ENCODE measurements at regions of chr2 and their contacts with region 1.

Region 1: GRCh38 chr2:190718652-190719526 is 70.0 kb downstream of the NAB1 start:
- DNase-seq: peak; percentile 91
- H3K4me3 Mint-ChIP-seq: peak overlapping the region; percentile 62
- H3K27ac Mint-ChIP-seq: peak overlapping the region; percentile 97
- H3K4me1 Mint-ChIP-seq: peaks cover 84% of the 10 kb centered on the region
- H3K27me3 Mint-ChIP-seq: no peaks in the 10 kb centered on the region

Region 2: GRCh38 chr2:190408538-190409271 is 310.2 kb before region 1 on chr2:
- CTCF ChIA-PET with region 1: no interaction called
- POLR2A ChIA-PET with region 1: no interaction called
- intact Hi-C with region 1: loop called (anchors 1 kb)
- DNase-seq: peak; percentile 80
- H3K4me3 Mint-ChIP-seq: peak overlapping the region; percentile 82
- H3K27ac Mint-ChIP-seq: peak overlapping the region; percentile 88
- H3K4me1 Mint-ChIP-seq: peaks cover 40% of the 10 kb centered on the region
- H3K27me3 Mint-ChIP-seq: no peaks in the 10 kb centered on the region

Region 3: DNA sequence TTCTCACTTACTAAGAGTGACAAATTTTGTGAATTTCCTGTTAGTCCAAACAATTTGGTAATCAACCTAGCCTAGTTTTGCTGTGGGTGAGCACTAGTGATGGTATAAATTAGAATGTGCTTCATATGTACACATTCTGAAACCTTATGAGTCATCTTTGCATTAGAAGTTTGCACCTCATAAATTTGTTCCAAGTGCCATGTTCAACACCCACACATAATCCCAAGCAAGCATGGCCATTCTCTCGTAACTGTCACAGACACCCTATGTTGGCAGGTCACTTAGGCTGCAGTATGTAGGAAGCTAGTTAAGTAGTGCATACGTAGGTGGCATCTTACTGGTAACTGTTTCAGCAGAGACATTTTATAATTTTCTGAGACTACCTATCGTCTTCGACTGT is 23.1 kb before region 1 on chr2:
- CTCF ChIA-PET with region 1: no interaction called
- POLR2A ChIA-PET with region 1: interaction called, 28 read pairs
- intact Hi-C with region 1: loop called (anchors 1 kb)
- DNase-seq: peak; percentile 61
- H3K4me3 Mint-ChIP-seq: no peak overlapping the region
- H3K27ac Mint-ChIP-seq: peak overlapping the region; percentile 44
- H3K4me1 Mint-ChIP-seq: peaks cover 42% of the 10 kb centered on the region
- H3K27me3 Mint-ChIP-seq: no peaks in the 10 kb centered on the region

Region 4: GRCh38 chr2:190791347-190791975 is 72.6 kb after region 1 on chr2:
- CTCF ChIA-PET with region 1: interaction called, 3 read pairs
- POLR2A ChIA-PET with region 1: no interaction called
- intact Hi-C with region 1: loop called (anchors 2 kb)
- DNase-seq: peak; percentile 73
- H3K4me3 Mint-ChIP-seq: no peak overlapping the region
- H3K27ac Mint-ChIP-seq: peak overlapping the region; percentile 61
- H3K4me1 Mint-ChIP-seq: peaks cover 55% of the 10 kb centered on the region
- H3K27me3 Mint-ChIP-seq: no peaks in the 10 kb centered on the region

Region 5: DNA sequence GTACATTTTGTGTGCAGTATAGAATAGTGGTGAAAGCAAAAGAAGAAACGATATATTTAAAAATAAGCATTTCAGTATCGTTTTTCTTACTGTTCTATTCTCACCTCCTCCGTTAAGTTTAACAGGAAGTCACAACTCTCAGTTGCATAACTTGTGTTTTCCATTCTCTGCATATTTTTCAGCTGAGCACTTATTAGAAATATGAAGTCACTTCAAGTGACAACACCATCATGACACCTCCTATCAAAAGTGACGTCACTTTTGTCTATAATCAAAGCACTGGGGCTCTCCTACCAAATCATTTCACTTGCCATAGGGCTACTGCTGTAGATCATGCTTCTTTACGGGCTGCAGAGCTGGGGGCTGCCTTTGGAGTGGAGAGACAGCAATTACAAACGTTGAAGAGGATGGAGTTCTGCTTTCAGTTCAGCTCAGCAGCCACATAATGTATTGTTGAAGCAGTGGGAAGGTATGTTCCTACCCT is 395.6 kb after region 1 on chr2:
- CTCF ChIA-PET with region 1: no interaction called
- POLR2A ChIA-PET with region 1: no interaction called
- intact Hi-C with region 1: loop called (anchors 2 kb)
- DNase-seq: peak; percentile 57
- H3K4me3 Mint-ChIP-seq: peak overlapping the region; percentile 66
- H3K27ac Mint-ChIP-seq: peak overlapping the region; percentile 88
- H3K4me1 Mint-ChIP-seq: peaks cover 70% of the 10 kb centered on the region
- H3K27me3 Mint-ChIP-seq: no peaks in the 10 kb centered on the region